ENCODE measurements at regions of chr17 and their contacts with region 1.

Region 1: DNA sequence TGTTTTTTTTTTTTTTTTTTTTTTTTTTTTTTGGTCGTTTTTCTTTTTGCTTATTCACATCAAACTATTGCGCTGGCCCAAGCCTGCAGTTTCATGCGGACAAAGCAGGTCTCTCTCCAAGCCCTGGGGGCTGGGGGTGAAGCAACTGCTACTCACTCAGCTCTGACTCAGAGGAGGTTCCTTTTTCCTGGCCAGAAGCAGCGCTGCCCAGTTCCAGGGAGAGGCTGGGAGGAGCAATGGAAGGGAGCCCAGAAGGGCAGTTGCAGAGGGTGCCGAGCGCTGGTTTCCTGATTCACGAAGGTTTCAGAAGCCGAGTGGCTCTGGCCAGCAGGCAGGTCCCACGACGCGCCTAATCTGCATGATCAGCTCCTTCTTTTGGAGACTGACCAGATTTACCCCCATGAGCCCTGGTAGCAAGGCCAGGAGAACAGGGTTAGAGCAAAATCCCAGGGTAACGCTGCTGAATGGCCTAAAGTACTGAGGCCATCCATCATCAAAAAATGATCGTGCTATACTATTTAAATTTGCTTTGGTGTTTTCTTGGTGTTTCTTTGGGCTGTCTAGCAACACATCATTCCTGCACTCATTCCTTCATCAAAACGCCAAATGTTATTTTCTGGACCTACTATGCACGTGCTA is 144.7 kb upstream of the SOX9 start:
- DNase-seq: peak; percentile 71
- ATAC-seq: peak; percentile 98
- H3K4me3 ChIP-seq: peak overlapping the region; percentile 10 to 51; a peak in 3 of 4 replicates
- H3K27ac ChIP-seq: peak overlapping the region; percentile 18
- H3K4me1 ChIP-seq: peaks cover 5% of the 10 kb centered on the region
- H3K27me3 ChIP-seq: no peaks in the 10 kb centered on the region
- CTCF ChIP-seq: no peak

Region 2: DNA sequence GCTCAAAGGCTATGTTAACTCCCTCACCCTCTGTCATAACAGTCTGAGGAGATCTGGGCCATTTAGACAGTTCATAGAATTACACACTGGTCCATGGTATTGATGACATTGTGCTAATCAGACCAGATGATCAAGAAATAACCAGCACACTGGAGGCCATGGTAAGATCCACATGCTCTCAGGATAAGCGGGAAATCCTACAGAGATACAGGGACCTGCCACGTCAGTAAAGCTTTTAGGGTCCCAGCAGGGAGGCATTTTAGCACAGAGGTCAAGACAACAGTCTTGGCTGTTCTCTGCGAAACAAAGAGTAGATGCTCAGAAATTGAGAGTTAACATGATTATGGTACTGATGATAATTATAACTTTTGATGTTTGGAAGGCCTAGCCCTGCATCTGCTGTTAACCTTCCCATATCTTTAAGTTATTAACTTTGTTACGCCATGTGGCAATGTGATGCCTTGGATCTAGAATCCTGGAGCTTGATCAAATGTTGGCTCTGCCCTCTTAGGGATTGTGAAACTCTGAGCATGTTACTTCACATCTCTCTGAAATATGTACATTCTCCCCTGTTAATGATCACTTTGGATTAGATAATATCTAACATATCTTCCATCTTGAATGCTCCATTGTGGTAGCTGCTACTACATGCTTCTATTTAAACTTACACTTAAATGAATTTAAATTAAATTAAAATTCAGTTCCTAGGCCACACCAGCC is 27.3 kb before region 1 on chr17:
- CTCF ChIA-PET with region 1: no interaction called
- POLR2A ChIA-PET with region 1: interaction called, 19 read pairs
- in situ Hi-C with region 1: no loop called
- intact Hi-C with region 1: no loop called
- DNase-seq: no peak
- ATAC-seq: no peak
- H3K4me3 ChIP-seq: no peak overlapping the region
- H3K27ac ChIP-seq: no peak overlapping the region
- H3K4me1 ChIP-seq: no peaks in the 10 kb centered on the region
- H3K27me3 ChIP-seq: 0 out of 2 replicates have a peak, but pooled peaks cover 3% of the 10 kb centered on the region
- CTCF ChIP-seq: no peak